WTC11 (cell line): ENCODE measurements at regions of chr20 and their contacts with region 1.

Region 1: GRCh38 chr20:44435630-44436335 is 39.9 kb upstream of the TTPAL start:
- DNase-seq: no peak
- ATAC-seq: no peak
- H3K4me3 Mint-ChIP-seq: no peak overlapping the region
- H3K27ac Mint-ChIP-seq: no peak overlapping the region
- H3K4me1 Mint-ChIP-seq: no peaks in the 10 kb centered on the region
- H3K27me3 Mint-ChIP-seq: no peaks in the 10 kb centered on the region
- CTCF ChIP-seq: no peak

Region 2: DNA sequence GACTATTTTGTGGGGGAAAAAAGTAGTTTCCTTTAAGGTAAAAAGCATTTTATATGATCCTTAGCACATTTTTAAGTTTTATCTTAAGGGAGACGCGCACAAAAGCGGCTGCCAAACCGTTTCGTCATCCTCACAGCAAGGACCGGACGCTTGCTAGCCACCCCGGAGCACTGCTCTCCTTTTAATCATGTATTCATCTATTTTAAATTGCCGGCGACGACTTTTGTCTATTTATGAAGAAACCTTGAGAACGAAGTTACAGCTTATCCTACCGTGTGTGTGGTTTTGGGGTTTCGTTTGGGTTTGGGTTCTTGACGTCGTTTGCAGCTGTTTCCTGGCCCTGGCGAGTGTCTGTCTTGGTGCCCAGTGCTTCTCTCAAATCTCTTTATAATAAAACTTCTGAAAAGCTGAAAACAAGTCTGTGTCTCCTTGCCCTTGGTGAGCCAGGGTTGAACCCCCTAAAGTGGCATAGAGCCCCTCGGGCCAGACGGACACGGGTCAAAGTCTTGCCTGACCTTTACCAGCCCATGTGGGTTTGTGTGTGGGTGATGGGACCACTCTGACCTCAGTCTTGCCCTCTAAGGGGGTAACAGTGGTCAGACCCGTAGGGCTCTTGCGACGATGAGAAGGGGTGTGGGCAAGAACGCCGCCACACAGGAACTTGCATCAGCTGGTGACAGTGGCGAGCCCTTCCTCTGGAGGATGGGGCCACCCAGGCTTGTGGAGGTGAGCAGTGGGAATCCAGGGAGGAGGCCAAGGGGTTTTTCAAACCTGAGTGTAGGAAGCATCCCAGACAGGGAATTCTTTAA is 366.4 kb before region 1 on chr20:
- CTCF ChIA-PET with region 1: no interaction called
- POLR2A ChIA-PET with region 1: no interaction called
- DNase-seq: no peak
- ATAC-seq: no peak
- H3K4me3 Mint-ChIP-seq: no peak overlapping the region
- H3K27ac Mint-ChIP-seq: no peak overlapping the region
- H3K4me1 Mint-ChIP-seq: peaks cover 18% of the 10 kb centered on the region
- H3K27me3 Mint-ChIP-seq: no peaks in the 10 kb centered on the region
- CTCF ChIP-seq: no peak

Region 3: GRCh38 chr20:44448753-44449546 is 13.2 kb after region 1 on chr20:
- CTCF ChIA-PET with region 1: interaction called, 18 read pairs
- POLR2A ChIA-PET with region 1: interaction called, 3 read pairs
- DNase-seq: peak; percentile 79
- ATAC-seq: peak; percentile 94
- H3K4me3 Mint-ChIP-seq: no peak overlapping the region
- H3K27ac Mint-ChIP-seq: peak overlapping the region; percentile 27; the same call in 1 of the 2 replicates
- H3K4me1 Mint-ChIP-seq: no peaks in the 10 kb centered on the region
- H3K27me3 Mint-ChIP-seq: no peaks in the 10 kb centered on the region; the same call in 1 of the 2 replicates
- CTCF ChIP-seq: peak; percentile 73